Activated naive CD4-positive, alpha-beta T cell treated with anti-CD3 and anti-CD28 coated beads, Interleukin-2, amount 10 ng/mL, durations not matched to agents 7 days and 5 days (primary cell): ENCODE measurements at regions of chr16 and their contacts with region 1.

Region 1: GRCh38 chr16:82671741-82672140 is 45.0 kb downstream of the CDH13 start:
- DNase-seq: peak; percentile 59
- H3K4me3 Mint-ChIP-seq: no peak overlapping the region
- H3K27ac Mint-ChIP-seq: no peak overlapping the region
- H3K4me1 Mint-ChIP-seq: no peaks in the 10 kb centered on the region
- H3K27me3 Mint-ChIP-seq: peaks cover 22% of the 10 kb centered on the region

Region 2: DNA sequence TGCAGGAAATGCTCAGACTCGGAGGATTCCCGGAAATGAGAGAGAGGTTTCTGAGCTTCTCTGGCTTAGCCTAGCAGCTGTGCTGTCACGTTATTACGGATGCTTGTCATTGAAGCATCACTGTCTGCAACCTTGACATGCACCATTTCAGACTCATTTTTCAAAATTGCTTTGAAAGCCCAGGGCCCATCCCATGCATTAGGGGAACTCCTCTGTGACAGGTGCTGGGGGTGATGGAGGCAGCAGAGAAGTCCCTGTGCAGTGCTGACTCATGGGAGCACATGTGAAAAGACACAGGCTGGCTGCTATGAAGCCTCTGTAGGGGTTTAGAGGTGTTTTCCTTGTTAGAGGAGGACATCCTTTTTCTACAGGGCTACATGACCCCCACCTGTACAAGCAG is 287.7 kb before region 1 on chr16:
- CTCF ChIA-PET with region 1: no interaction called
- DNase-seq: no peak
- H3K4me3 Mint-ChIP-seq: no peak overlapping the region
- H3K27ac Mint-ChIP-seq: no peak overlapping the region
- H3K4me1 Mint-ChIP-seq: no peaks in the 10 kb centered on the region
- H3K27me3 Mint-ChIP-seq: no peaks in the 10 kb centered on the region

Region 3: GRCh38 chr16:82639666-82640336 is 31.9 kb before region 1 on chr16:
- CTCF ChIA-PET with region 1: interaction called, 75 read pairs
- DNase-seq: peak; percentile 64
- H3K4me3 Mint-ChIP-seq: no peak overlapping the region
- H3K27ac Mint-ChIP-seq: no peak overlapping the region
- H3K4me1 Mint-ChIP-seq: peaks cover 7% of the 10 kb centered on the region
- H3K27me3 Mint-ChIP-seq: no peaks in the 10 kb centered on the region

Region 4: DNA sequence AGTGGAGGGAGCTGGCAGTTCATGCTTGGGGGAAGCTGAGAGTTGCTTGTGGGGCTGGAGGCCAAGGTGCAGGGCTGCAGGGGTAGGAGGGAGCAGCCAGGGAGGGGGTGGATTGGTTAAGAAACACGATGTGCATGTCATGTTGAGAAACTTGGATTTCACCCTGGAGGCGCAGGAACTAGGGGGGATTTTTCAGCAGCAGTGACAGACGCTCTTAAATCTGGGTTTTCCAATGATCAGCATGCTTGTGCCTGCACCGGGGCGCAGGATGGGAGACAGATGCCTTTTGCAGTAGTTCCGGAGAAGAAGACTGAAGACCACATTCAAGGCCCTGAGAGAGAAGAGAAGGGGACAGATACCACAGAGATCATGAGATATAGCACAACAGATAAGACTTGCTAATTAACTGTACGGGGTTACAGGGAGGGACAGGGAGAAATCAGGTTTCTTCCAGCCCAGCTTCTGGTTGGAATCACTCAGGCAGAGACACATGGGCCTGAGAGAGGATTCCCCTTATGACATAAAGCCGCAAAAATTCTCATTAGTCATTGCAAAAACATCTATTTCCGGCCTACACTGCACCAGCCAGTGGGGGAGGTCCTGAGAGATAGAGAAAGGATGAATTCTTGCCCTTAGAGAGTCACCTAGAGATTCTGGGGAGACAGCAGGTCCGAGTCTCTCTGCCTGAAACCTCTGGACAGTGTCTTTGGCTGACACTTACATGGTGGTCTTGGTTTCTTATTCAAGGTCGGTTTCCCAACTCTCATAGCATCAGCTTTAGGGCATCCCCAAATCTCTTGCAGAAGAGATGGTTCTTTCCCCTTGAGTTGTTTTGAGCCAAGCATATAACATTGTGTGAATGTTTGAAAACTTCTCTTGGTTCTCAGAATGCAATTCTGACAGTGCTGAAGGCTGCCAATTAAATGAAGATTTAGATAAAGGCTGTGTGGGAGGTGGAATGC is 17.9 kb before region 1 on chr16:
- CTCF ChIA-PET with region 1: interaction called, 13 read pairs
- DNase-seq: peak; percentile 59
- H3K4me3 Mint-ChIP-seq: peak overlapping the region; percentile 25
- H3K27ac Mint-ChIP-seq: peak overlapping the region; percentile 92
- H3K4me1 Mint-ChIP-seq: peaks cover 95% of the 10 kb centered on the region
- H3K27me3 Mint-ChIP-seq: no peaks in the 10 kb centered on the region